ENCODE measurements at regions of chr3 and their contacts with region 1.

Region 1: GRCh38 chr3:158644345-158644908 is at the start of gene GFM1:
- DNase-seq: peak; percentile 90 to 91
- H3K4me3 ChIP-seq: peak within 1 kb of the TSS; percentile 97
- H3K4me3 Mint-ChIP-seq: peak within 1 kb of the TSS; percentile 84
- H3K27ac Mint-ChIP-seq: peak within 1 kb of the TSS; percentile 91
- H3K4me1 ChIP-seq: 0 out of 2 replicates have a peak, but pooled peaks cover 9% of the 10 kb centered on the region
- H3K4me1 Mint-ChIP-seq: no peaks in the 10 kb centered on the region
- H3K27me3 ChIP-seq: no peaks in the 10 kb centered on the region; the same call in 1 of the 2 replicates
- H3K27me3 Mint-ChIP-seq: no peaks in the 10 kb centered on the region
- CTCF ChIP-seq: peak; percentile 70 to 94
- total RNA-seq, gene GFM1: 52.4 and 58.2 TPM in 2 replicates

Region 2: DNA sequence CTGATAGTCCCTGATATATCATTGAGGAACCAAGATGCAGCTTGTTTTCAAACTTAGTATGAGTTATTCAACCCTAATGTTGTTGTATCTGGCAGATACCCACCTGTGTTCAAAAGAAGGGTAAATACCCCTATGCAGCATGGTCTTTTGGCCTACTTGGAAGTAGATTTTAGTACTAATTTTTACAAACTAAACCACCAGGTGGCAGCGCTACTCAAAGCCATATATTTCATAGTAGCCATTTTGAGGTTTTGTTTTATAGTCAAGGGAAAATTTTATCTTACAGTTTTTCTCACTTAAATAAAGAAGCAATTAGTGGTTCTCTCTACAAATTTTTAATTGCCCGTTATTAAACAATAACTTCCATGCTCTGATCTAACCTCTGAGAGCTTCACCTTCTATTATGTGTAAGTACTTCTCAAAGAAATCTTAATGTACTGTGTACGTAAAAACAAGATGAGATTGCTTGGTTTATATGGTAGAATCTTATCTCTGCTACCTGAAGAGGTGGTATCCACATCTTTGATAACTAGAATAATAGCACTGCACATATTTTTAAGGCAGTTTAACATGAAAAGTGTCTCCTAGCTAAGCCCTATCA is 104.9 kb before region 1 on chr3:
- CTCF ChIA-PET with region 1: interaction called, 4 read pairs
- POLR2A ChIA-PET with region 1: no interaction called
- intact Hi-C with region 1: loop called (anchors 5 kb)
- DNase-seq: peak in 1 of 2 experiments; percentile 55
- H3K4me3 ChIP-seq: no peak overlapping the region
- H3K4me3 Mint-ChIP-seq: no peak overlapping the region
- H3K27ac Mint-ChIP-seq: no peak overlapping the region
- H3K4me1 ChIP-seq: no peaks in the 10 kb centered on the region
- H3K4me1 Mint-ChIP-seq: no peaks in the 10 kb centered on the region
- H3K27me3 ChIP-seq: no peaks in the 10 kb centered on the region
- H3K27me3 Mint-ChIP-seq: no peaks in the 10 kb centered on the region
- CTCF ChIP-seq: peak; percentile 48 to 66

Region 3: GRCh38 chr3:158568784-158569183 is 75.6 kb before region 1 on chr3:
- CTCF ChIA-PET with region 1: interaction called, 4 read pairs
- POLR2A ChIA-PET with region 1: no interaction called
- intact Hi-C with region 1: loop called (anchors 5 kb)
- DNase-seq: no peak
- H3K4me3 ChIP-seq: no peak overlapping the region
- H3K4me3 Mint-ChIP-seq: no peak overlapping the region
- H3K27ac Mint-ChIP-seq: no peak overlapping the region
- H3K4me1 ChIP-seq: no peaks in the 10 kb centered on the region
- H3K4me1 Mint-ChIP-seq: no peaks in the 10 kb centered on the region
- H3K27me3 ChIP-seq: no peaks in the 10 kb centered on the region
- H3K27me3 Mint-ChIP-seq: peaks cover 2% of the 10 kb centered on the region
- CTCF ChIP-seq: no peak

Region 4: GRCh38 chr3:158659454-158660237 is 15.2 kb after region 1 on chr3:
- CTCF ChIA-PET with region 1: interaction called, 31 read pairs
- POLR2A ChIA-PET with region 1: interaction called, 3 read pairs
- intact Hi-C with region 1: no loop called
- DNase-seq: peak; percentile 46 to 48
- H3K4me3 ChIP-seq: no peak overlapping the region
- H3K4me3 Mint-ChIP-seq: no peak overlapping the region
- H3K27ac Mint-ChIP-seq: no peak overlapping the region
- H3K4me1 ChIP-seq: no peaks in the 10 kb centered on the region
- H3K4me1 Mint-ChIP-seq: peaks cover 6% of the 10 kb centered on the region
- H3K27me3 ChIP-seq: no peaks in the 10 kb centered on the region
- H3K27me3 Mint-ChIP-seq: no peaks in the 10 kb centered on the region
- CTCF ChIP-seq: peak; percentile 50 to 59